Calu3 (cell line): ENCODE measurements at regions of chr11 and their contacts with region 1.

Region 1: DNA sequence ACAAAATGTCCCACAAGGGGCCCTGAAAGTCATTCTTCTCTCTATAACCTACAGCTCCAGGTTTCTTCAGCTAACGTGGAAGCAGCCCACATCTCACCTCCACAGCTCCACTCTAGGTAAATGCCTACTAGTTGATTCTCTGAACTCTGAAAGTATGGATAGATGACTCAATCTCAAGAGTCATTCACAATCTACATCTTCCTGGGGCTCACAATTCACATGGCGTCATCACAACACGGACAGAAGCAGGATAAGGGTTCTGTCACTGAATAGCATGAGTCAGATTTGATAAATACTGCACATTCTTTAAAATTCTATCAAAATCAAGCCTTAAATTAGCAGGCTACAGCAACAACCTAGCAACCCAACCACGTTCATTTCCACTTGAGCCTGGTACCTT is 96.3 kb downstream of the PLEKHA7 start:
- DNase-seq: peak; percentile 26
- H3K4me3 Mint-ChIP-seq: peak overlapping the region; percentile 45
- H3K27ac Mint-ChIP-seq: peak overlapping the region; percentile 94
- H3K4me1 Mint-ChIP-seq: peaks cover 84% of the 10 kb centered on the region
- H3K27me3 Mint-ChIP-seq: no peaks in the 10 kb centered on the region
- CTCF ChIP-seq: no peak

Region 2: DNA sequence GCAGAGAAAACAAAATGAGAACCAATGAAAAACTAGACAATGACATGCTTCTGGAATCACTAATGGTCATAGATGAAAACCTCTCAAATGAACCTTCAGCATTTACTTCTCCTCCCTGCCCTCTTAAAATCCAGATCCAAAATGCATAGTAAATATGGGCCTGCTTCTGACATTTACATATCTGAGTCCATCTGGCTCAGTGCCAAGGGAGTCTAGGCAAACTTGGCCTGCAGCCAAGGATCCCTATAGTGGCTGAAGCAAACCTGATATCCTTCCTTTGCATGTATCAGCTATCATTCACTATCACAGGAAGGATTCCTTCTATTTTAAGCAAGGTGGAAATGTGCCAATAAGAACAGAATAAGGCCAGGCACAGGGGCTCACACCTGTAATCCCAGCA is 74.6 kb before region 1 on chr11:
- CTCF ChIA-PET with region 1: no interaction called
- intact Hi-C with region 1: no loop called
- DNase-seq: no peak
- H3K4me3 Mint-ChIP-seq: no peak overlapping the region
- H3K27ac Mint-ChIP-seq: no peak overlapping the region
- H3K4me1 Mint-ChIP-seq: peaks cover 5% of the 10 kb centered on the region
- H3K27me3 Mint-ChIP-seq: no peaks in the 10 kb centered on the region
- CTCF ChIP-seq: no peak

Region 3: DNA sequence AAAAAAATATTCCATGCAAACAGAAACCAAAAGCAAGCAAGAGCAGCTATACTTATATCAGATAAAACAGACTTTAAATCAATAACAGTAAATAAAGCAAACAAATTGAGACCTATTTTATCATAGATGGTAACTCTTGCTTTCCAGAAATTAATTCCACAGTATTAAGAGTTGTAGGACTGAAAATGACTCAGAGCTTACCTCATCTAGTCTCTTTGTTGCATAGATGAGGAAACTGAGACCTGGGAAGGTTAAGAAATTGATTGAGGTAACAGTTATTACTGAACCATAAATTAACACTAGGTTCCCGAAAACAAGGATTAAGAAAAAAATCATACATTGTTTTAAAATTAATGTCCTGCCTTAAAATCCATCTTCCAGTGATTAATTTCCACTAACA is 27.5 kb before region 1 on chr11:
- CTCF ChIA-PET with region 1: interaction called, 13 read pairs
- intact Hi-C with region 1: no loop called
- DNase-seq: no peak
- H3K4me3 Mint-ChIP-seq: peak overlapping the region; percentile 36
- H3K27ac Mint-ChIP-seq: peak overlapping the region; percentile 96
- H3K4me1 Mint-ChIP-seq: peaks cover 84% of the 10 kb centered on the region
- H3K27me3 Mint-ChIP-seq: no peaks in the 10 kb centered on the region
- CTCF ChIP-seq: no peak

Region 4: GRCh38 chr11:16902781-16903378 is 15.1 kb before region 1 on chr11:
- CTCF ChIA-PET with region 1: interaction called, 10 read pairs
- intact Hi-C with region 1: loop called (anchors 2 kb)
- DNase-seq: no peak
- H3K4me3 Mint-ChIP-seq: peak overlapping the region; percentile 29
- H3K27ac Mint-ChIP-seq: peak overlapping the region; percentile 93
- H3K4me1 Mint-ChIP-seq: peaks cover 64% of the 10 kb centered on the region
- H3K27me3 Mint-ChIP-seq: no peaks in the 10 kb centered on the region
- CTCF ChIP-seq: no peak